CD4-positive, alpha-beta T cell (primary cell): ENCODE measurements at regions of chr10 and their contacts with region 1.

Region 1: GRCh38 chr10:95864906-95865813 is 42.6 kb upstream of the CC2D2B start:
- DNase-seq: peak in 10 of 14 experiments; percentile 1 to 70 (median 10)
- ATAC-seq: peak; percentile 77
- H3K4me3 ChIP-seq: no peak overlapping the region
- H3K4me3 Mint-ChIP-seq: no peak overlapping the region
- H3K27ac ChIP-seq: no peak overlapping the region
- H3K27ac Mint-ChIP-seq: no peak overlapping the region
- H3K4me1 ChIP-seq: no peaks in the 10 kb centered on the region
- H3K4me1 Mint-ChIP-seq: peaks cover 4% of the 10 kb centered on the region
- H3K27me3 ChIP-seq: no peaks in the 10 kb centered on the region
- H3K27me3 Mint-ChIP-seq: no peaks in the 10 kb centered on the region
- CTCF ChIP-seq: peak; percentile 35

Region 2: DNA sequence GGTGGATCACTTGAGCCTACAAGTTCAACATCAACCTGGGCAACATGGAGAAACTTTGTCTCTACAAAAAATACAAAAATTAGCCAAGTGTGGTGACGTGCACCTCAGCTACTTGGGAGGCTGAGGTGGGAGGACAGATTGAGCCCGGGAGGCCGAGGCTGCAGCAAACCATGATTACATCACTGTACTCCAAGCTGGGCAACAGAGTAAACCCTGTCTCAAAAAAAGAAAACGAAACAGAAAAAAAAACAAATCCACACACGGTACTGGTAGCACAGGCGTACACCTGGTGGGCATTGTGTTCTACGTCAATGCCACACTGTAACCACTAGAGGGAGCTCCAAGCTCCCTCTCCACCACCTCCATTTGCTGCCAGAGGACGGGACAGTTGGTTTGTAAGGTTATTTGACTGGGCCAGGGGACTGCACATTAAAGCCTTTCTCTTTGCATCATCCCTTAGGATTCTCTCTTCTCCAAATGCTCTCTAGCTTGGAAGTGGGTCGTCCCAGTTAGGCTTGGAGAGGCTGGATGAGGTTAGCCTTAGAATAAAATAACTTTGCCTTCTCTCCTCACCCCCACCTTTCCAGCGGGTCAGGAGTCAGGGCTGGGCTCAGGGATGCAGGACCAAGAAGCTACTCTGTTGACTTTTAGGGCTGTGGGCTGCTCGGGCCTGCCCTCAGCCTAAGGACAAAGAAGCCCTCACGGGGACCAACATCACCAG is 434.8 kb before region 1 on chr10:
- CTCF ChIA-PET with region 1: interaction called, 4 read pairs
- POLR2A ChIA-PET with region 1: no interaction called
- intact Hi-C with region 1: loop called in 1 of 2 experiments (anchors 5 kb)
- DNase-seq: peak in 12 of 14 experiments; percentile 7 to 71 (median 16)
- ATAC-seq: peak; percentile 75
- H3K4me3 ChIP-seq: no peak overlapping the region
- H3K4me3 Mint-ChIP-seq: no peak overlapping the region
- H3K27ac ChIP-seq: no peak overlapping the region
- H3K27ac Mint-ChIP-seq: no peak overlapping the region
- H3K4me1 ChIP-seq: no peaks in the 10 kb centered on the region
- H3K4me1 Mint-ChIP-seq: no peaks in the 10 kb centered on the region
- H3K27me3 ChIP-seq: no peaks in the 10 kb centered on the region
- H3K27me3 Mint-ChIP-seq: no peaks in the 10 kb centered on the region
- CTCF ChIP-seq: peak; percentile 97

Region 3: GRCh38 chr10:95656291-95657164 is 208.6 kb before region 1 on chr10 and contains the start of gene ALDH18A1:
- CTCF ChIA-PET with region 1: no interaction called
- POLR2A ChIA-PET with region 1: no interaction called
- intact Hi-C with region 1: no loop called
- DNase-seq: peak; percentile 79 to 95 (median 90)
- ATAC-seq: peak; percentile 90
- H3K4me3 ChIP-seq: peak within 1 kb of the TSS; percentile 70
- H3K4me3 Mint-ChIP-seq: peak within 1 kb of the TSS; percentile 100
- H3K27ac ChIP-seq: peak within 1 kb of the TSS in 1 of 2 donors; percentile 16
- H3K27ac Mint-ChIP-seq: peak within 1 kb of the TSS; percentile 86
- H3K4me1 ChIP-seq: peaks cover 18% of the 10 kb centered on the region
- H3K4me1 Mint-ChIP-seq: peaks cover 39% of the 10 kb centered on the region
- H3K27me3 ChIP-seq: no peaks in the 10 kb centered on the region
- H3K27me3 Mint-ChIP-seq: no peaks in the 10 kb centered on the region
- CTCF ChIP-seq: no peak
- total RNA-seq, gene ALDH18A1: 9.6 to 12.6 TPM

Region 4: GRCh38 chr10:95941115-95941514 is 76.0 kb after region 1 on chr10:
- CTCF ChIA-PET with region 1: no interaction called
- POLR2A ChIA-PET with region 1: no interaction called
- intact Hi-C with region 1: no loop called
- DNase-seq: no peak
- ATAC-seq: no peak
- H3K4me3 ChIP-seq: no peak overlapping the region
- H3K4me3 Mint-ChIP-seq: no peak overlapping the region
- H3K27ac ChIP-seq: no peak overlapping the region
- H3K27ac Mint-ChIP-seq: no peak overlapping the region
- H3K4me1 ChIP-seq: no peaks in the 10 kb centered on the region
- H3K4me1 Mint-ChIP-seq: no peaks in the 10 kb centered on the region
- H3K27me3 ChIP-seq: peaks cover 0 to 3% of the 10 kb centered on the region in 2 experiments
- H3K27me3 Mint-ChIP-seq: no peaks in the 10 kb centered on the region
- CTCF ChIP-seq: no peak